Activated B cell treated with CpG ODN at 0.5 μM for 24 hours (primary cell): ENCODE measurements at regions of chr3 and their contacts with region 1.

Region 1: GRCh38 chr3:161069511-161070263 is 35.5 kb downstream of the B3GALNT1 start:
- DNase-seq: no peak
- ATAC-seq: peak; percentile 91
- H3K4me3 Mint-ChIP-seq: peak overlapping the region; percentile 51
- H3K27ac Mint-ChIP-seq: peak overlapping the region; percentile 82
- H3K4me1 Mint-ChIP-seq: peaks cover 48% of the 10 kb centered on the region
- H3K27me3 Mint-ChIP-seq: no peaks in the 10 kb centered on the region
- CTCF ChIP-seq: no peak

Region 2: GRCh38 chr3:160665784-160666526 is 403.7 kb before region 1 on chr3:
- CTCF ChIA-PET with region 1: no interaction called
- POLR2A ChIA-PET with region 1: no interaction called
- intact Hi-C with region 1: loop called (anchors 1 kb)
- DNase-seq: no peak
- ATAC-seq: peak; percentile 79
- H3K4me3 Mint-ChIP-seq: peak overlapping the region; percentile 39
- H3K27ac Mint-ChIP-seq: peak overlapping the region; percentile 79
- H3K4me1 Mint-ChIP-seq: peaks cover 26% of the 10 kb centered on the region
- H3K27me3 Mint-ChIP-seq: no peaks in the 10 kb centered on the region
- CTCF ChIP-seq: no peak

Region 3: DNA sequence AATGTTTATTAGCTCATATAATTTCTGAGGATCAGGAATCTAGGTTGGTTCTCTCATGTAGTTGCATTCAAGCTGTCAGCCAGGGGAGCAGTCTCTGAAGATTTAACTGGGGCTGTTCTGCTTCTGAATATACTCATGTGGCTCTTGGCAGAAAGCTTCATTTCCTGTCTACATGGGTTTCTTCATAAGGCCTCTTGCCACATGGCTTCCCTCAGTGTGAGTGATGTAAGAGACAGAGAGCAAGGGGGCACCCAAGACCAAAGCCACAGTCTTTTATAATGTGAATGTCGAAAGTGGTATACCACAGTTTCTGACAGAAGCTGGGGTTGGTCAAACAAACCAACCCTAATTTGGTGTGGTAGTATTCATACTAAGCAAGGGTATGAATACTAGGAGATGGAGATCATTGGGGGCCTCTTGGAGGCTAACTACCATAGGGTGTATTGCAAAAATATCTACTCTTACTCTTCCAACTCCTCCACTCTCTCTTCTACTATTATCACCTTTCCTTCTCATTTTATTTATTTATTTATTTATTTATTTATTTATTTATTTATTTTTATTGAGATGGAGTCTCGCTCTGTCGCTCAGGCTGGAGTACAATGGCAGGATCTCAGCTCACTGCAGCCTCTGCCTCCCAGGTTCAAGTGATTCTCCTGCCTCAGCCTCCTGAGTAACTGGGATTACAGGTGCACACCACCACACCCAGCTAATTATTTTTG is 88.3 kb before region 1 on chr3:
- CTCF ChIA-PET with region 1: no interaction called
- POLR2A ChIA-PET with region 1: interaction called, 3 read pairs
- intact Hi-C with region 1: loop called (anchors 2 kb)
- DNase-seq: no peak
- ATAC-seq: peak; percentile 81
- H3K4me3 Mint-ChIP-seq: no peak overlapping the region
- H3K27ac Mint-ChIP-seq: peak overlapping the region; percentile 9
- H3K4me1 Mint-ChIP-seq: peaks cover 18% of the 10 kb centered on the region
- H3K27me3 Mint-ChIP-seq: no peaks in the 10 kb centered on the region
- CTCF ChIP-seq: no peak

Region 4: GRCh38 chr3:161035711-161036110 is 34.0 kb before region 1 on chr3:
- CTCF ChIA-PET with region 1: interaction called, 6 read pairs
- POLR2A ChIA-PET with region 1: interaction called, 14 read pairs
- intact Hi-C with region 1: loop called (anchors 1 kb)
- DNase-seq: no peak
- ATAC-seq: peak; percentile 47
- H3K4me3 Mint-ChIP-seq: peak overlapping the region; percentile 54
- H3K27ac Mint-ChIP-seq: no peak overlapping the region
- H3K4me1 Mint-ChIP-seq: peaks cover 19% of the 10 kb centered on the region
- H3K27me3 Mint-ChIP-seq: no peaks in the 10 kb centered on the region
- CTCF ChIP-seq: no peak

Region 5: GRCh38 chr3:161081633-161082032 is 11.9 kb after region 1 on chr3:
- CTCF ChIA-PET with region 1: no interaction called
- POLR2A ChIA-PET with region 1: no interaction called
- intact Hi-C with region 1: no loop called
- DNase-seq: no peak
- ATAC-seq: no peak
- H3K4me3 Mint-ChIP-seq: no peak overlapping the region
- H3K27ac Mint-ChIP-seq: no peak overlapping the region
- H3K4me1 Mint-ChIP-seq: peaks cover 19% of the 10 kb centered on the region
- H3K27me3 Mint-ChIP-seq: no peaks in the 10 kb centered on the region
- CTCF ChIP-seq: no peak

Region 6: GRCh38 chr3:161104561-161105551 is 35.2 kb after region 1 on chr3 and contains the start of gene B3GALNT1:
- CTCF ChIA-PET with region 1: interaction called, 3 read pairs
- POLR2A ChIA-PET with region 1: interaction called, 8 read pairs
- intact Hi-C with region 1: loop called (anchors 1 kb)
- DNase-seq: peak; percentile 39
- ATAC-seq: peak; percentile 85
- H3K4me3 Mint-ChIP-seq: peak within 1 kb of the TSS; percentile 82
- H3K27ac Mint-ChIP-seq: no peak within 1 kb of the TSS
- H3K4me1 Mint-ChIP-seq: peaks cover 12% of the 10 kb centered on the region
- H3K27me3 Mint-ChIP-seq: peaks cover 8% of the 10 kb centered on the region
- CTCF ChIP-seq: no peak
- total RNA-seq, gene B3GALNT1: 4.6 and 8.5 TPM in 2 replicates